Colonic mucosa (tissue), 4 donors: ENCODE measurements at regions of chr4 and their contacts with region 1.

Region 1: DNA sequence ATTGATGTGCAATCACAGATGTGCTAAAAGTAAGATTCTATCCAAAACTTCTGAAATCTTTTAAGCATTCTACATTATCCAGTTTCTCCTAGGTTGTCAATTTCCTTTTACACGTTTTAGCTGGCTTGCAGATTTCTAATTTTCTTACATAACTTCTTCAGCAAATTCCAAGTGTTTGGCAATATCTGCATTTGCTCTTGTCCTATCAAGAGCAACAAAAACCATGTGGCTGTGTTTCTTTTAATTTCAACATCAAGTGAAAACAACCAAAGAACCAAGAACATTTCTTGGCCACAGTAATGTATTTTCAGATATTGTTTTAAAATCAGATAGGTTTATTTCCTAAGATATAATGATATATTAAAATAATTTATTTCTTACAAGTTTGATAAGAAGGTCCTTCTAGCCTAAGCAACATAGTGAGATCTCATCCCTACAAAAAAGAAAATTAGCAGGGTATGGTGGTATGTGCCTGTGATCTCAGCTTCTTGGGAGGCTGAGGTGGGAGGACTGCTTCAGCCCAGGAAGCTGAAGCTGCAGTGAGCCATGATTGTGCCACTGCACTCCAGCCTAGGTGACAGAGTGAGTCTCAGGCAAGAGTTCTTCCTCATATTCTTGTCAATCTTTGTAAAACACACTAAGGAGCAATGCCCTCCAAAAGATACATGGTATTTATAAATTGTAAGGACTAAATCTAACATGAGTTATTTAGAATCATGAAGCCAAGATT is 131.4 kb upstream of the NAP1L5 start:
- DNase-seq: no peak
- H3K4me3 ChIP-seq: no peak overlapping the region
- H3K27ac ChIP-seq: no peak overlapping the region
- H3K4me1 ChIP-seq: no peaks in the 10 kb centered on the region
- H3K27me3 ChIP-seq: no peaks in the 10 kb centered on the region
- CTCF ChIP-seq: no peak

Region 2: GRCh38 chr4:88623097-88623496 is 205.9 kb before region 1 on chr4:
- intact Hi-C with region 1: no loop called
- DNase-seq: no peak
- H3K4me3 ChIP-seq: no peak overlapping the region
- H3K27ac ChIP-seq: no peak overlapping the region
- H3K4me1 ChIP-seq: no peaks in the 10 kb centered on the region
- H3K27me3 ChIP-seq: no peaks in the 10 kb centered on the region
- CTCF ChIP-seq: no peak

Region 3: GRCh38 chr4:88659055-88659889 is 169.7 kb before region 1 on chr4:
- intact Hi-C with region 1: no loop called
- DNase-seq: peak; percentile 49
- H3K4me3 ChIP-seq: no peak overlapping the region
- H3K27ac ChIP-seq: peak overlapping the region; percentile 13
- H3K4me1 ChIP-seq: no peaks in the 10 kb centered on the region
- H3K27me3 ChIP-seq: no peaks in the 10 kb centered on the region
- CTCF ChIP-seq: peak; percentile 79

Region 4: DNA sequence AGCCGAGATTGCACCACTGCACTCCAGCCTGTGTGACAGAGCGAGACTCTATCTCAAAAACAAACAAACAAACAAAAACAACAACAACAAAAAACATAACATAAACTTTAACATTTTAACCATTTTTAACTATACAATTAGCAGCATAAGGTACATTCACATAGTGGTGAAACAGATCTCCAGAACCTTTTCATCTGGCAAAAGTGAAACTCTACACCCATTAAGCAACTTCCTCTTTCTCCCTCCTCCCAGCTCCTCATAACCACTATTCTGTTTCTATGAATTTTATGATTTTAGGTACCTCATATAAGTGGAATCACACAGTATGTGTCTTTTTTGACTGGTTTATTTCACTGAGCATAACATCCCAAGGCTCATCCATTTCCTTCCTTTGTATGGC is 124.4 kb after region 1 on chr4:
- intact Hi-C with region 1: loop called (anchors 5 kb)
- DNase-seq: no peak
- H3K4me3 ChIP-seq: no peak overlapping the region
- H3K27ac ChIP-seq: no peak overlapping the region
- H3K4me1 ChIP-seq: no peaks in the 10 kb centered on the region
- H3K27me3 ChIP-seq: no peaks in the 10 kb centered on the region
- CTCF ChIP-seq: no peak

Region 5: GRCh38 chr4:89022426-89023128 is 193.6 kb after region 1 on chr4:
- intact Hi-C with region 1: no loop called
- DNase-seq: no peak
- H3K4me3 ChIP-seq: no peak overlapping the region
- H3K27ac ChIP-seq: no peak overlapping the region
- H3K4me1 ChIP-seq: no peaks in the 10 kb centered on the region
- H3K27me3 ChIP-seq: no peaks in the 10 kb centered on the region
- CTCF ChIP-seq: no peak